Left ventricle myocardium superior (tissue), 1 donor: ENCODE measurements at regions of chr12 and their contacts with region 1.

Region 1: DNA sequence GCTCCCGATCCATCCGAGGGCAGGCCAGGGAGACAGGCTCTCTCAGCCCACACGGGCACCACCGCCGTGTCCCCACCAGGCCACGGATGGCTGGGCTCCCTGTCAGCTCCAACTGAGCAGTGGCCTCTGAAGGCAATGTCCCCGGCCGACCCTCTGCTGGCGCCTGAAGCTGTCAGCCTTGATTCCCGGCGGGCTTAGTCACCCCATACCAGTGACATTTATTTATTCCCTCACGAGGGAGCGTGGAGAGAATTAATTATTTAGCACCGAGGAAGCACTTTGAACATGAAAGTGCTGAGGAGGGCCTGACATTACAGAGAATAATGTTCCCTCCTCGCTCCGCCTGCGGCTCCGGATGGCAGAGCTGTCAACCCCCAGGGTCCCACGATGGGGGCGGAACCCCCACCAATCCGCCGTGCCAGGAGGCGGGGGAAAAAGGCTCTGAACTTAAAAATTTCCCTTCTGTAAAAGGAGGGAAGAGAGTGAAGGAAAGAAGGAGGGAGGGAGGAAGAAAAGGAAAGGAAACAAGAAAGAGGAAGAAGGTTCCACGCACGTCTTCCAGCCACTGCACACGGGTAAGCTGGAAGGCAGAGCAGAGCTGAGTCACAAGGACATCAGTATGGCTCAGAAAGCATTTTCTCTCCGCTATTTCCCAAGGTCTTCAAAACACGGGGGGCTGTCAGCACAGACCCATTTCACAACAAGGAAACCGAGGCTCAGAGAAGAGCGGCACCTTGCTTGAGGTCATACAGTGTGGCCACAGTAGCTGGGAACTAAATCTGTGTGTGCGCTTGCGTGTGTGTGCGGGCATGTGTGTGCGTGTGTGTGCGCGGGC is 108.7 kb upstream of the NCOR2 start:
- DNase-seq: peak; percentile 57
- ATAC-seq: peak; percentile 58

Region 2: DNA sequence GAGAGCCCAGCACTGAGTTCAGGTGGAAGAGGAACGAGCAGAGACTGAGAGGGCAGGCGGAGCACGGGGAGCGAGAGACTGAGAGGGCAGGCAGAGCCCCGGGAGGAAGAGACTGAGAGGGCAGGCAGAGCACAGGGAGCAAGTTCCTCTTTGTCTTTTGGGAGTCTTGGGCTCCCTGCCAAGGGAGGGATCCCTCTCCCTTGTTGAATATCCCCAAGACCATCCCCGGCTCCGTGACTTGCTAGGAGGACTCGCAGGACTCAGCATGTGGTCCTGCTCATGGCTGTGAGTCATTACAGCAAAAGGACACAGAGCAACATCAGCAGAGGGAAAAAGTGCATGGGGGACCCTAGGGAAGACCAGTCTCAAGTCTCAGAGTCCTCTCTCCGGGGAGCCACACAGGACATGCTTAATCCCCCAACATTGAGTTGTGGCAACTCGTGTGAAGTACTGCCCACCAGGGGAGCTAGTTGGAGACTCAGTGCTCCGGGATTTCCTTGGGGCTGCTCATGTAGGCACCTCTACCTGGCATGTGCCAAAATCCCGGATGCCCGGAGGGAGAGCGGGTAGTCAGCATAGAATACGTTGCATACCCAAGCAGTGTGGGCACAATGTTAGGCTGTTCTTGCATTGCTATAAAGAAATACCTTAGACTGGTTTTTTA is 784.5 kb before region 1 on chr12:
- intact Hi-C with region 1: no loop called
- DNase-seq: no peak
- ATAC-seq: no peak

Region 3: DNA sequence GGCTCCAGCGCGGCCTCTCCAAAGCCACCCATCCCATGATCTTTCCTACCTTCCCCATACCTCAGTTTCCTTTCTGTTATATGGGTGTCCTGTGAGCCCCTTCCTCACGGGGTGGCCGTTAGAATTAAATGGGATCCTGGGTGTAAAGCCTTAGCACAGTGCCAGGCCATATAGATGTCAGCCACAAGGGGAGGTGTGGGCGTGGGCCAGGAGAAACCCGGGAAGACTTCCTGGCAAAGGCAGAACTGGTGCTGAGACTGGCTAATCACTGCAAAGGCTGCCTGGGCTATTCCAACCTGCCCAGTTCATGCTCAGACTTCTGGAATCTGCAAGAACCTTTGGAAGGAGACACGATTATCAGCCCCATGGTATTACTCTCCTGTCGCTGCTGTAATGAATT is 97.7 kb before region 1 on chr12:
- intact Hi-C with region 1: loop called (anchors 10 kb)
- DNase-seq: no peak
- ATAC-seq: no peak

Region 4: DNA sequence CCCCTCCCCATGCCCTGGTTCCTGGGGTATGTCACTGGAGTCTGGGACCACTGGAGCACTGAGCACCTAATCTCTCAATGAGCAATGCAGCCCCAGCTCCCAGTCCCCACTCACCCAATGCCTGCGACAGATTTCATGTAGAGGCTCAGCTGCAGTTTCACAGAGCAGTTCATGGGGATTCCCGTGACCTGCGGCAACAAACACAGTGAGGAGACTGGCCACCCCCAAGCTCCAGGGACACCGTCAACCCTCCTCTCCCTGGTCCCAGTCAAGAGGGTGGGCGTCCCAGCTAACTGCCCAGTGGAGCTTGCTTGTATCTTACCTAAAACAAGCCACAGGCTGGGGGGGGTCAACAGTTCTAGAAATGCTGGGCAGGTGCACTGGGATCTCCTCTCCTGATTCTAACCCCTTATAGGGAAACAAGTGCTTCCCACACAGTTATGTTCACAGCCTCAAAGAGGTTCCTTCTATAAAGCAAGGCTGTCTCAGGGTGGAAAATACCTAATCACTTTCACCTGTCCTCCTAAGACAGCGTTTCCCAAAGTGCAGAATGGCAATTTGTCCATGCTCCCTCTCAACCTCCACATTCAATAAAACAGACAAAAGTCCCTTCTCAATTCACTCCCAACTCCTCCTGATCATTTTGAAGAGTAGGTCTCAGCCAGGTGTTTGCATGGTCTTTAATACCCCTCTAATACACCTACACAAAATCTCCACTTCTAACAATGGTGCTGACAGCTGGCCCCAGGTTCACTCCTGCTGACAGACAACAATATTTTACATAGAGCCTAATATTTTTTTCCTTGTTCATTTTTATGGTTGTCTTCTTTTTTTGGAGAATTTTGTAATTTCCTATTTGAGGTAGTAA is 119.2 kb after region 1 on chr12:
- intact Hi-C with region 1: no loop called
- DNase-seq: no peak
- ATAC-seq: no peak

Region 5: DNA sequence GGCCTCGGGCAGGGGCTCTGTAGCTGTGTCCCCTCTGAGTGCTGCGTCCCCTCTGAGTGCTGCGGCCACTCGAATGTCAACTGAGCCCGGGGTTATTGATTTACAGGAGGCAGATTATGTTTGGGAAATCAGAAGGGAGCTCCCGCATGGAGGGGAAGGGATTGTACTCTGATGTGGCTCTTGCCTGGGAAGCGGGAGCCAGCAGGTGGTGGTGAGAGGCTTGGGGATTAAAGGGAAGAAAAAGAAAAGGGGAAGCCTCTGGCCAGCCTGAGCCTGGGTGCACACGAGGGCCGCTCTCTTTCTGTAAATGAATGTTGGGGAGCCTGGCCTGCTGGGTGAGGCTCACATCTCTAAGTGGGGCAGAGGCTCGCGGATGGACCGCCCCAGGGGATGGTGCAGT is 532.8 kb after region 1 on chr12:
- intact Hi-C with region 1: no loop called
- DNase-seq: no peak
- ATAC-seq: no peak